Activated naive CD4-positive, alpha-beta T cell treated with anti-CD3 and anti-CD28 coated beads for 36 hours (primary cell): ENCODE measurements at regions of chr3 and their contacts with region 1.

Region 1: DNA sequence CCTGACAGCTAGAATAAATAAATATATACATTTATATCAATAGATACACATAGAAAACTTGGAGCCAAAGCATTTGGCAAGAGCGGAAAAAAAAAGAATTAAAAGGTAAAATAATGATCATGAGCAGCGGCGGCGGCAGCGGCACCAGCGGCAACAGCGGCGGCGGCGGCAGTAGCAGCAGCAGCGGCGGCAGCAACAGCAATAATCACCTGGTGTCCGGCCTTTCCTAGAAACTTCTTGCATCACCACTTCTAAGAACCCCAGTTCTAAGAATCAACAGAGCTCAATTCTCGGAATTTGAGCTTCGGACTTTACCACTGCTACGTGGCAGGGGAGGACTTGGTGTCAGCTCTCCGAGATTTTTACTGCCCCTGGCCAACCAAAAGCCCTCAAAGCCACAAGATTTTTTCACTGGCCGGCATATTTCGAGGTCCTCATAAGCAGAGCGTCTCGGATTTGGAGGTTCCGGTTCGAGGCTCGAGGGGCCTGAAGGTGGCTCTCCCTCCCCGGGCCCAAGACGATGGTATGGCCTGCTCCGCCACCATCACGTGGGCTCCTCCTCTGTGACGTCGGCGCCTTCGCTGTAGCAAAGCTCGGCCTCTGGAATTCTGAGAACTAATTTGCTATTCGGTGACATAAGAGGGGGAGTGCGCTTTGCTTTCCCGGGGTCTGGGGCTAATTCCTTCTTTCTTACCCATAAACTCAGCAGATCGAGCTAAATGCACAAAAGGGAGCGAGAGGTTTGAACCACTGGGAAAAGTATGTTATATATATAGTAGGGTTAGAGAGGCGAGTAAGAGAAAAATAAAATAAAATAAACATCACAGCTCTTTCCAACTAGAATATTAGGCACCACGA is at the start of gene BCL6:
- DNase-seq: peak; percentile 92
- H3K4me3 Mint-ChIP-seq: peak within 1 kb of the TSS; percentile 86
- H3K27ac Mint-ChIP-seq: peak within 1 kb of the TSS; percentile 97
- H3K4me1 Mint-ChIP-seq: peaks cover 46% of the 10 kb centered on the region
- H3K27me3 Mint-ChIP-seq: no peaks in the 10 kb centered on the region
- total RNA-seq, gene BCL6: 98.9 to 101 TPM

Region 2: DNA sequence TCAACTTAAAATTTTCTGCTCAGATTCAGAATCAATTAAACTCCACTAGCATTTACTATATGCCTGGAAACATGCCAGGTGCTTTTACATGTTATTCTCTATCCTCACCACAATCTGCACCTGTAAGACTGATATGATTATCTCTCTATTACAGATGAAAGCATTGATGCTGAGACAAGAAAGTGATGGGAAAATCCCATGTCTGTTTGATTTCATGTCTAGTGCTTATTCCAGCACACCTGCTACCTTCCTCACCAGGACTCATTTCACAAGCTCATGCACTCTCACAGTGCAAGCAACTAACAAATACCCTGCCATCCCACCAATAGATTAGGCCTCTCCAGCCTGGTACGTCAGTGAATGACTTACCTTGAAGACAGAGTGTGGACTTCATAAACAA is 24.8 kb after region 1 on chr3:
- CTCF ChIA-PET with region 1: interaction called, 19 read pairs
- intact Hi-C with region 1: loop called (anchors 1 kb)
- DNase-seq: peak; percentile 73
- H3K4me3 Mint-ChIP-seq: no peak overlapping the region
- H3K27ac Mint-ChIP-seq: peak overlapping the region; percentile 82
- H3K4me1 Mint-ChIP-seq: peaks cover 38% of the 10 kb centered on the region
- H3K27me3 Mint-ChIP-seq: no peaks in the 10 kb centered on the region

Region 3: GRCh38 chr3:187802928-187803259 is 57.5 kb after region 1 on chr3:
- CTCF ChIA-PET with region 1: interaction called, 21 read pairs
- intact Hi-C with region 1: loop called (anchors 1 kb)
- DNase-seq: peak; percentile 89
- H3K4me3 Mint-ChIP-seq: peak overlapping the region; percentile 1
- H3K27ac Mint-ChIP-seq: peak overlapping the region; percentile 79
- H3K4me1 Mint-ChIP-seq: peaks cover 95% of the 10 kb centered on the region
- H3K27me3 Mint-ChIP-seq: no peaks in the 10 kb centered on the region

Region 4: DNA sequence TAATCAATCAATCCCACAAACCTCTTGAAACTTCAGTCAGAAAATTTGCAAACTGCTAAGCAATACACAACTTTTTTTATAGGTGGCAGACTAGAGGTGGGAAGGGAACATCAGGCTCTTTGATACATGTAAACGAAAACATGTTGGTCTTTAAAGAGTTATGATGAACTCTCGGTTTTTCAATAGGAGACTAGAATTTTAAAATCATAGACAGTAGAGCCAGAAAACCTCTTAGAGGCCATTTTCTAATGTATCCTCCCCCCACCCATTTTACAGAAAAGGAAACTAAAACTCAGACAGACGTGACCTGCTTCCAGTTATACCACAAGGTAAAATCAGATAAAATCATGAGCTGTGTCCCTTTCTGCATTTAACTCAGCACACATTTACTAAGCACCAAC is 229.4 kb after region 1 on chr3:
- CTCF ChIA-PET with region 1: interaction called, 40 read pairs
- intact Hi-C with region 1: loop called (anchors 1 kb)
- DNase-seq: no peak
- H3K4me3 Mint-ChIP-seq: peak overlapping the region; percentile 50
- H3K27ac Mint-ChIP-seq: peak overlapping the region; percentile 82
- H3K4me1 Mint-ChIP-seq: peaks cover 50% of the 10 kb centered on the region
- H3K27me3 Mint-ChIP-seq: no peaks in the 10 kb centered on the region

Region 5: DNA sequence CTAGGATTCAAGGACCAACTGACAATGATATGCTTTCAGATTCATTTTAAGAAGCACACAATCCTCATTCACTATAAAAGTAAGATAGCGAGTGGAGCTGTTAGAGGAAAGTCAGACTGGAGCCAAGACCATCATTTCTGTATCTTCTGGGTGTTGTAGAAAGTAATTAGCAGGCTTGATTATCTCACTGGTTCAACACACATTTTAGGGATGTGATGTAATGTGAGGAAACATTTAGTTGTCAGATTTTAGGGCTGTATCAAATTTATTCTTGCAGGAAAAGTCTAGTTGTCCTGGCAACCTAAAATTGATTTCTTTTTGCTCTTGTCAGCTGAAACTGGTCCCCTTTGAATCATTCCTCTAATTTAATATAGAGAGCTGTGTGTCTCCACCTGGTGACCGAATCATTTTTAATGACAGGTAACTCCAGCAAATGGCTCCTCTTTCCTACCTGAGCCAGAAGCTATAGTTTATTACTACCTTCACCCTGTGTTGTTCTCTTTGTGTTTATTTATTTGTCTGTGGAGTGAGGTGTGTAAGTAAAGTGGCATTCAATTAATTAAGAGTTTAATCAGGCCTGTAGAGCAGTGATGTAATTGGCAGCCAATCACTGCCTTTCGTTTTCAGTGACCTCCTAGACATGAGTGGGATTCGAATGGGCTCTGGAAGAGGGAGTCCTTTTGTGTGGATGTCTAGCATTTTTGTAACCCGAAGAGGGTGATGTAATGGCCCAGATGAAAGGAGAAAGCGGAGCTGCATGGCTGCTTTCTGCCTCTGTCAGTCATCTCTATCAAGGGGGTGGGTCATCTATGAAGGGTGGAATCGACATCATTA is 534.3 kb after region 1 on chr3:
- CTCF ChIA-PET with region 1: interaction called, 22 read pairs
- intact Hi-C with region 1: loop called (anchors 1 kb)
- DNase-seq: no peak
- H3K4me3 Mint-ChIP-seq: no peak overlapping the region
- H3K27ac Mint-ChIP-seq: no peak overlapping the region
- H3K4me1 Mint-ChIP-seq: peaks cover 29% of the 10 kb centered on the region
- H3K27me3 Mint-ChIP-seq: no peaks in the 10 kb centered on the region

Region 6: GRCh38 chr3:188339410-188340295 is 594.2 kb after region 1 on chr3:
- CTCF ChIA-PET with region 1: interaction called, 6 read pairs
- intact Hi-C with region 1: loop called (anchors 1 kb)
- DNase-seq: peak; percentile 76
- H3K4me3 Mint-ChIP-seq: peak overlapping the region; percentile 59
- H3K27ac Mint-ChIP-seq: peak overlapping the region; percentile 92
- H3K4me1 Mint-ChIP-seq: peaks cover 34% of the 10 kb centered on the region
- H3K27me3 Mint-ChIP-seq: no peaks in the 10 kb centered on the region

Region 7: GRCh38 chr3:188749010-188749617 is 1003.7 kb after region 1 on chr3:
- CTCF ChIA-PET with region 1: interaction called, 13 read pairs
- intact Hi-C with region 1: loop called (anchors 1 kb)
- DNase-seq: peak; percentile 66
- H3K4me3 Mint-ChIP-seq: no peak overlapping the region
- H3K27ac Mint-ChIP-seq: no peak overlapping the region
- H3K4me1 Mint-ChIP-seq: peaks cover 29% of the 10 kb centered on the region
- H3K27me3 Mint-ChIP-seq: no peaks in the 10 kb centered on the region